Gastrocnemius medialis (tissue), 4 donors: ENCODE measurements at regions of chr10 and their contacts with region 1.

Region 1: DNA sequence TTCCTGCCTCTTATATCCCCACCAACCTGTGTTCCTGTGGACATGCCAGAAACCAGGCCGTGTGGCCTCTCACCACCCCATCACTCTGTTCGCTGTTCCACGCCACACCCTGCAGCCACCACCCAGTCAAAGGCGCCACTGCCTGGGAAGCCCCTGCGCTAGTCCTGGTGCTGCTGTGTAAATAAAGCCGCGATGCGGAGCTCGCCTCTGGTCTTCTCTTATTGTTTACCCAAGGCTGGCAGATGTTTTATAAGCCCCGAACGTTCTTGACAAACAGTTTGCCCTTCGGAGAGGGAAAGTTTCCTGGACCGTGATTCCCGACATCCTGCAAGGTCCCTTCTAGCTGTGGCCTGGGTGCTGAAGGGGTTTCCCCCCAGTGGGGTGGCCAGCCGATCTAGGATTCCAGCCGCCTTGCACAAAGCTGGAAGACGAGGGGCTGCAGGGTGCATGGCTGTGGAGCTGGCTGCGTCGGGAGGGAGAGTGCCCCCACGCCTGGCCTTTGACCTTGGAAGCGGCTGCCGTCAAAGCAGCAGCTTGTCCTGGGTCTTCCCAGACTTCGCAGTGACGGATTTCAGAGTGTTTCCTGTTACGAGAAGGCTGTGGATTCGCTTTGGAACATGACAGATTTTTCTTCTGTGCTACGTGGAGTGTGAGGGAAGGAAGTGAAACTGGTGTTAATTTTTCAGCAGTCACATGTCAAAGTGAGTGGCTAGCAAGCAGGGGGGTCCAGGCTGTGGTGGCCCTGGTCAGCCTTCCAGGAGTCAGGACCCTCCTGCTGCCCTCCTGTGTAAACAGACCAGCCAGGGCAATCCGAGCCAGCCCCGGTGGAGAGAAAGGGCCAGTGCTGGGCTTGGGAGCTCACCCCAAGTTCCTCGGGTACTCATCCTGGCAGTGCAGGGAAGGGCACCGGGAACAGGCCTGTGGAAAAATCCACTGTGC is 61.6 kb downstream of the LHPP start:
- DNase-seq: no peak
- ATAC-seq: no peak
- H3K4me3 ChIP-seq: peak overlapping the region in 2 of 4 donors; percentile 9 to 14
- H3K27ac ChIP-seq: peak overlapping the region in 3 of 4 donors; percentile 25 to 90 (median 65)
- H3K4me1 ChIP-seq: peaks cover 19 to 30% of the 10 kb centered on the region in 2 donors
- H3K27me3 ChIP-seq: no peaks in the 10 kb centered on the region
- CTCF ChIP-seq: no peak
- POLR2A ChIP-seq: no peak

Region 2: DNA sequence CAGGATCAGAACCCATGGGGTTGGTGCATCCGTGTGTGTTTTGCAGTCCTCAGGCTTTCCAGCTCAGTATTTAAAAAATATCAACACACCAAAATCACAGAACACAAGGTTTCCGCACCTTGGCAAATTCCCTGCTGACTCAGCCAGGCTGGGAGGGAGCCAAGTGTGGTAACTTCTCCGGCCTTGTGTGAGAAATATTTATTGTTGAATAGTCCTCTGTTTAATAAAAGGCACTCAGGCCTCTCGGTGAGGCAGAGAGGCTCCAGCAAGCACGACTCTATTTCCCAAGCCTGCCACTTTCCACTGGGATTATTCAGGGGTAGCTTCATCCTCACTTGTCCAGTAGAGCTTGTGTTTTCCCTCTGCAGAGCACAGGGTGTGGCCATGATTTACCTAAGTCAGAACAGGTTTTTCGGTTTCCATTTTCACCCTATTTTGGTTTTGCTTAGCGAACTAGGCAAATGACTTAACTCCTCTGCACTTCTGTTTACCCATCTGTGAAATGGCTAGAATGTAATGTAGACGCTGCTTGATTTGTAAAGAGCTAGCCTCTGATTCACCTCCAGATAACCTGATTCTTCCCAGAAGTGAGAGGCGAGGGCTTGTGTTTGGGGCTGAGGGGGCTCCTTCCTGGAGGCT is 416.8 kb before region 1 on chr10:
- in situ Hi-C with region 1: no loop called
- intact Hi-C with region 1: no loop called
- DNase-seq: peak in 1 of 2 donors; percentile 37
- ATAC-seq: peak; percentile 52 to 68
- H3K4me3 ChIP-seq: no peak overlapping the region
- H3K27ac ChIP-seq: peak overlapping the region; percentile 31 to 73 (median 54)
- H3K4me1 ChIP-seq: peaks cover 10 to 15% of the 10 kb centered on the region in 2 donors
- H3K27me3 ChIP-seq: no peaks in the 10 kb centered on the region
- CTCF ChIP-seq: no peak
- POLR2A ChIP-seq: no peak

Region 3: GRCh38 chr10:124418726-124419501 is 104.3 kb before region 1 on chr10 and contains the start of gene OAT:
- in situ Hi-C with region 1: no loop called
- intact Hi-C with region 1: loop called (anchors 5 kb)
- DNase-seq: peak; percentile 94 to 95
- ATAC-seq: peak; percentile 93
- H3K4me3 ChIP-seq: peak within 1 kb of the TSS; percentile 67 to 86 (median 76)
- H3K27ac ChIP-seq: peak within 1 kb of the TSS; percentile 81 to 95 (median 94)
- H3K4me1 ChIP-seq: peaks cover 31 to 42% of the 10 kb centered on the region in 2 donors
- H3K27me3 ChIP-seq: no peaks in the 10 kb centered on the region
- CTCF ChIP-seq: no peak
- POLR2A ChIP-seq: peak; percentile 98 to 99
- total RNA-seq, gene OAT: 20.1 to 97.2 (median 42.6) TPM

Region 4: GRCh38 chr10:124461438-124462347 is 61.5 kb before region 1 on chr10 and contains the start of gene LHPP:
- in situ Hi-C with region 1: no loop called
- intact Hi-C with region 1: loop called (anchors 5 kb)
- DNase-seq: peak; percentile 51 to 76
- ATAC-seq: peak; percentile 97 to 98
- H3K4me3 ChIP-seq: peak within 1 kb of the TSS; percentile 64 to 72 (median 67)
- H3K27ac ChIP-seq: peak within 1 kb of the TSS; percentile 76 to 92 (median 88)
- H3K4me1 ChIP-seq: no peaks in the 10 kb centered on the region
- H3K27me3 ChIP-seq: no peaks in the 10 kb centered on the region
- CTCF ChIP-seq: peak in 3 of 5 experiments; percentile 63 to 91 (median 69)
- POLR2A ChIP-seq: peak in 1 of 2 donors; percentile 22
- total RNA-seq, gene LHPP: 4.9 to 16.0 (median 12.2) TPM

Region 5: DNA sequence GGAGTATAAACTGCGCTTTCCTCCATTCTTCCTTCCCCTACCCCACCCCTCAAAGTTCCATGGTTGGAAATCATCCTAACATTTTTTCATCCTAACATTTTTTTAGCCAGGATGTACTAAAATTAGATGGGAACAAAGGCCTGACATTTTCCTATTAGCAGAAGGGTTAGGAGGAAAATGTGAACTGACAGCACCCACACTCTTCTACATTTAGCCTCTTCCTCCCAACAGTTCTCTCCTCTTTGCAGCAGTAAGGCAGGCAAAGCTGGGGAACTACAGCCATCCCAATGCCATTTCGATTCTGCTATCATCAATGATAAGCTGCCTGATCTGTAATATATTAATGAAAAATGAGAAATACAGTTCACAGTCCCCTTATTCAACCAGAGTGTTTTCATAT is 232.4 kb after region 1 on chr10:
- in situ Hi-C with region 1: no loop called
- intact Hi-C with region 1: no loop called
- DNase-seq: no peak
- ATAC-seq: no peak
- H3K4me3 ChIP-seq: no peak overlapping the region
- H3K27ac ChIP-seq: no peak overlapping the region
- H3K4me1 ChIP-seq: peaks cover 14 to 37% of the 10 kb centered on the region in 2 donors
- H3K27me3 ChIP-seq: no peaks in the 10 kb centered on the region
- CTCF ChIP-seq: no peak
- POLR2A ChIP-seq: no peak

Region 6: GRCh38 chr10:124827474-124827873 is 304.3 kb after region 1 on chr10:
- in situ Hi-C with region 1: loop called in 3 of 4 experiments (anchors 5 to 25 kb)
- intact Hi-C with region 1: loop called (anchors 5 kb)
- DNase-seq: no peak
- ATAC-seq: no peak
- H3K4me3 ChIP-seq: no peak overlapping the region
- H3K27ac ChIP-seq: no peak overlapping the region
- H3K4me1 ChIP-seq: peaks cover 6 to 8% of the 10 kb centered on the region in 2 donors
- H3K27me3 ChIP-seq: no peaks in the 10 kb centered on the region
- CTCF ChIP-seq: peak in 4 of 5 experiments; percentile 34 to 62 (median 58)
- POLR2A ChIP-seq: no peak

Region 7: GRCh38 chr10:125048101-125048864 is 525.1 kb after region 1 on chr10:
- in situ Hi-C with region 1: no loop called
- intact Hi-C with region 1: loop called (anchors 10 kb)
- DNase-seq: peak; percentile 69 to 82
- ATAC-seq: peak; percentile 63 to 79
- H3K4me3 ChIP-seq: peak overlapping the region in 1 of 4 donors; percentile 2
- H3K27ac ChIP-seq: peak overlapping the region; percentile 15 to 69 (median 24)
- H3K4me1 ChIP-seq: peaks cover 71 to 91% of the 10 kb centered on the region in 2 donors
- H3K27me3 ChIP-seq: no peaks in the 10 kb centered on the region
- CTCF ChIP-seq: peak; percentile 95 to 98 (median 98)
- POLR2A ChIP-seq: no peak